BJ (cell line): ENCODE measurements at regions of chr11 and their contacts with region 1.

Region 1: DNA sequence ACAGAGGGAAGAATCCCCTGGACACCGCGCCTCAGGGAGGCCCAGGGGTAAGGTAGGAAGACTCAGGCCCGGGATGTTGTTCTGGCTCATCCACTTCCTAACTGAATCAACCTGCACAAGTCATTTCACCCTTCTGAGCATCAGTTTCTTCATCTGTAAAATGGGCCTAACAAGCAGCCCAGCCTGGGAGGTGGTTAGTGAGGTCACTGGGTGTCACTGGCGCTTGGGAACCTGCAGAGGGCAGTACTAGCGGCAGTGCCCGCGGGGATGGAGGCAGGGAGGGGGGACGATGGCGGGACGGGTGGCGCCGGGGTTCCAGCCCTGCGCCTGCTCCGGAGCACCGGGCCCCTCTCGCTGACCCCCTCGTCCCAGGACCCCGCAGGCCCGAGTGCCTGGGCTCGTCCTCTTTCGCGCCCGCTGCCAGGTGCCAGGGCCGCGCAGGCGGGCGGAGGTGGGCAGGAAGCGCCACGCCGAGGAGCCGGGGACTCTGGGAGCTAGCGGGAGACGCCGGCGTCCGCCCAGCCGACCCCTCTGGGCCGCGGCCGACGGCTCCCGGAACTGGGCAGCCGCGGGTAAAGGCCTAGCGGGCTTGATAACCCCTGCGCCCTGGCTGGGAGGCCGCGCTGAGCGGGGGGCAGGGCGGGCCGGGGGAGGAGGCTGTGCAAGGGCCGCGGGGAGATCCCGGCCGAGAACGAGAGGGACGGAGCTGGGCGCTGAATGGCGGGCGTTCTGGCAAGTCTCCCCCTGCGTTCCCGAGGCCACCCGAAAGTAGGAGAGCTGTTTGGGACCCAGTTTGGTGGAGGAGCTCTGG is at the start of gene NLRX1:
- DNase-seq: peak; percentile 15
- H3K4me3 ChIP-seq: peak within 1 kb of the TSS; percentile 65
- H3K27me3 ChIP-seq: no peaks in the 10 kb centered on the region
- CTCF ChIP-seq: peak; percentile 96
- polyA plus RNA-seq, gene NLRX1: 12.0 and 19.4 TPM in 2 replicates

Region 2: DNA sequence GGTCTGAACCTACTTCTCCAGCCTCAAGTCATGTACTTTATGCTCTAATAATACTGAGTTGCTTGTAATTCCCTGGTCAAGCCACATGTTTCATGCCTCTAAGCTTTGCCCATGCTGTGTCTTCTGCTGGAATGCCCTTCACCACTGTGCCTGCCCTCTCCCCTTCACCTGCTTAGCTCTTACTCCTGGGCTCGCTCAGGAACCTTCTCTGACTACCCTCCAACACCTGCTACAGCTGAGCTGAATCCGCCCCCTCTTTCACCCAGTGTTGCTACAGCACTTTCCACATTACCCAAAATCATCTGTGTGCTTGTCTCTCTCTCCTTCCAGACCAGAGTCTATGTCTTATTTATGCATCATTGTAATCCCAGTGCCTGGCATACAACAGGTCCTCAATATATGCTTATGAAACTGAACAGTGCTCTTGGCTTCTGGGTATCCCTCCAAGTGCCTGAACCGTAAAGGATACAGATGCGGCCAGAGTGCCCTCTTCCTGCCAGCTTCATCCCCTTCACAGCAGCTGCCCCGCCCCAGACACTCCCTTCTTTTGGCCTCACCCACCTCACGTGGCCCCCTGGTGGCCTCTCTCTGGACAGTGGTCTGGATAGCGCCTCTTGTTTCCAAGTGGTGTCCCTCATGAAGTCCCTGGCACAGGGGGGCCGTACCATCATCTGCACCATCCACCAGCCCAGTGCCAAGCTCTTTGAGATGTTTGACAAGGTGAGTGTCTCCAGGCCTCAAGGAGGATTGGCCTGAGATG is 12.8 kb before region 1 on chr11:
- CTCF ChIA-PET with region 1: interaction called, 18 read pairs
- POLR2A ChIA-PET with region 1: no interaction called
- DNase-seq: no peak
- H3K4me3 ChIP-seq: no peak overlapping the region
- H3K27me3 ChIP-seq: peaks cover 13% of the 10 kb centered on the region
- CTCF ChIP-seq: peak; percentile 32; the same call in 1 of the 2 replicates

Region 3: GRCh38 chr11:119229288-119229672 is 60.6 kb after region 1 on chr11:
- CTCF ChIA-PET with region 1: no interaction called
- POLR2A ChIA-PET with region 1: no interaction called
- DNase-seq: no peak
- H3K4me3 ChIP-seq: no peak overlapping the region
- H3K27me3 ChIP-seq: no peaks in the 10 kb centered on the region
- CTCF ChIP-seq: no peak